Dendritic cell treated with granulocyte-macrophage colony-stimulating factor and Interleukin-4, amounts not matched to agents 40 ng/mL and 50 ng/mL, for 4 days (primary cell): ENCODE measurements at regions of chr5 and their contacts with region 1.

Region 1: GRCh38 chr5:108681079-108681921 is 66.4 kb upstream of the FER start:
- H3K4me3 Mint-ChIP-seq: no peak overlapping the region
- H3K27ac Mint-ChIP-seq: no peak overlapping the region
- H3K4me1 Mint-ChIP-seq: peaks cover 19% of the 10 kb centered on the region
- H3K27me3 Mint-ChIP-seq: no peaks in the 10 kb centered on the region

Region 2: DNA sequence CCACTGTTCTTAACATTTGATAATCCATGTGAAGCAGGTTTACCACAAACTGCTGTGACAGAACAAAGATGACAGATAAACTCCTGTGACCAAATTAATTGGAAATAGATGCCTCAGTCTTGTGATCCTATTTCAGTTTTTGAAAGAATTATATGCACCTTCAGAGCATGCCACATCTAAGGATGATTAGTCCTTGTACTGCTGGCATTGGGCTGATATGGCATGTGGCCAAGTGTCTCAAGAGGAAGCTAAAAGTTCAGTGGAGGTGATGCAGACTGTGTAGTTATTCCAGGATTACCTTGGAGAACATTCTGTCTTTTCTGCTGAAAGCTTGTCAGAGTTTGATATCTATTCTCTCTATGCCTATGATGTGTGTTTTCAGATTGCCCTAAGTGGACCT is 696.2 kb before region 1 on chr5:
- intact Hi-C with region 1: no loop called
- H3K4me3 Mint-ChIP-seq: no peak overlapping the region
- H3K27ac Mint-ChIP-seq: no peak overlapping the region
- H3K4me1 Mint-ChIP-seq: peaks cover 4% of the 10 kb centered on the region
- H3K27me3 Mint-ChIP-seq: no peaks in the 10 kb centered on the region

Region 3: GRCh38 chr5:108748401-108749127 is 67.3 kb after region 1 on chr5:
- intact Hi-C with region 1: loop called (anchors 5 kb)
- H3K4me3 Mint-ChIP-seq: peak overlapping the region; percentile 98
- H3K27ac Mint-ChIP-seq: peak overlapping the region; percentile 99
- H3K4me1 Mint-ChIP-seq: peaks cover 7% of the 10 kb centered on the region
- H3K27me3 Mint-ChIP-seq: peaks cover 3% of the 10 kb centered on the region